Mammary epithelial cell (primary cell): ENCODE measurements at regions of chr2 and their contacts with region 1.

Region 1: GRCh38 chr2:197499594-197500526 is at the starts of genes HSPD1 and HSPE1:
- DNase-seq: peak; percentile 100
- H3K4me3 ChIP-seq: peak within 1 kb of the TSS; percentile 75 to 94 (median 88)
- H3K27ac ChIP-seq: peak within 1 kb of the TSS; percentile 79
- H3K4me1 ChIP-seq: peaks cover 31% of the 10 kb centered on the region
- H3K27me3 ChIP-seq: no peaks in the 10 kb centered on the region
- CTCF ChIP-seq: no peak
- total RNA-seq, gene HSPD1: 143 to 350 TPM
- total RNA-seq, gene HSPE1: 30.2 to 118 TPM

Region 2: GRCh38 chr2:197434541-197435513 is 65.0 kb before region 1 on chr2 and contains the start of gene SF3B1:
- CTCF ChIA-PET with region 1: no interaction called
- dilution Hi-C with region 1: no loop called
- in situ Hi-C with region 1: no loop called
- intact Hi-C with region 1: loop called (anchors 2 kb)
- DNase-seq: peak; percentile 98
- H3K4me3 ChIP-seq: peak within 1 kb of the TSS; percentile 76 to 91 (median 88)
- H3K27ac ChIP-seq: peak within 1 kb of the TSS; percentile 94
- H3K4me1 ChIP-seq: peaks cover 12% of the 10 kb centered on the region
- H3K27me3 ChIP-seq: no peaks in the 10 kb centered on the region
- CTCF ChIP-seq: no peak
- total RNA-seq, gene SF3B1: 132 to 153 TPM

Region 3: GRCh38 chr2:197487385-197487784 is 12.5 kb before region 1 on chr2:
- CTCF ChIA-PET with region 1: no interaction called
- dilution Hi-C with region 1: no loop called
- in situ Hi-C with region 1: no loop called
- intact Hi-C with region 1: loop called (anchors 1 kb)
- DNase-seq: no peak
- H3K4me3 ChIP-seq: no peak overlapping the region
- H3K27ac ChIP-seq: no peak overlapping the region
- H3K4me1 ChIP-seq: no peaks in the 10 kb centered on the region
- H3K27me3 ChIP-seq: no peaks in the 10 kb centered on the region
- CTCF ChIP-seq: no peak

Region 4: DNA sequence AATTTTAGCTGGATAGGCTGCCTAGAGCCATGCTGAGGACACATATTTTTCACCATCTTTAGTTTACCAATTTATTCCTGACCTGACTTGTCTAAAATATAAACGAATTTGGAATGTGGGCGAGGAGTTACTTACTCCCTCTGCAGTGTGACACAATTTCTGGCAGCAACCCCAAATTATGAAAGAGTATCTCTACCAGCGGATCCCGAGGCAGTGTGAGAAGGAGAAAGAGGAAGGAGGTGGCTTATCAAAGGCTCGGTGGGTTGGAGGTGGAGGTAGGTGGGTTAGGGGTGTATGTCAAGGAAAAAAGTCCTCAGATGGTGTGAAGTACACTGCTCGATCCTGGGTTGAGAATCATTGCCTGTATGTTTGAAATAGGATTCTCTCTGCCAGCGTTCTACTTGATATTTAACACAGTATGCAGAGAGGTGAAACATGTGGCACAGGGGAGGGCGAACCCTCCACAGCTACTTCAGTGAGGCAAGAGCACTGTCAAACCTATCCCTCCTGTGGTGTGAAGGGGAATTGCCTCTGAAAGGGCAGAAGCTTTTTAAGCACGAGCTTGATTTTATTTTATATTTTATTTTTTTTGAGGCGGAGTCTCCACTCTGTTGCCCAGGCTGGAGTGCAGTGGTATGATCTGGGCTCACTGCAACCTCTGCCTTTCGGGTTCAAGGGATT is 99.6 kb after region 1 on chr2:
- CTCF ChIA-PET with region 1: no interaction called
- dilution Hi-C with region 1: no loop called
- in situ Hi-C with region 1: no loop called
- intact Hi-C with region 1: loop called (anchors 1 kb)
- DNase-seq: peak; percentile 54
- H3K4me3 ChIP-seq: peak overlapping the region in 1 of 3 experiments; percentile 24
- H3K27ac ChIP-seq: no peak overlapping the region
- H3K4me1 ChIP-seq: peaks cover 6% of the 10 kb centered on the region
- H3K27me3 ChIP-seq: peaks cover 1% of the 10 kb centered on the region
- CTCF ChIP-seq: peak; percentile 44 to 66

Region 5: GRCh38 chr2:197705121-197705911 is 205.5 kb after region 1 on chr2 and contains the start of gene MARS2:
- CTCF ChIA-PET with region 1: no interaction called
- dilution Hi-C with region 1: no loop called
- in situ Hi-C with region 1: no loop called
- intact Hi-C with region 1: loop called (anchors 2 kb)
- DNase-seq: peak; percentile 88
- H3K4me3 ChIP-seq: peak within 1 kb of the TSS; percentile 69 to 98 (median 76)
- H3K27ac ChIP-seq: peak within 1 kb of the TSS; percentile 41
- H3K4me1 ChIP-seq: peaks cover 25% of the 10 kb centered on the region
- H3K27me3 ChIP-seq: no peaks in the 10 kb centered on the region
- CTCF ChIP-seq: no peak
- total RNA-seq, gene MARS2: 10.0 to 11.2 TPM